ENCODE measurements at regions of chr22 and their contacts with region 1.

Region 1: DNA sequence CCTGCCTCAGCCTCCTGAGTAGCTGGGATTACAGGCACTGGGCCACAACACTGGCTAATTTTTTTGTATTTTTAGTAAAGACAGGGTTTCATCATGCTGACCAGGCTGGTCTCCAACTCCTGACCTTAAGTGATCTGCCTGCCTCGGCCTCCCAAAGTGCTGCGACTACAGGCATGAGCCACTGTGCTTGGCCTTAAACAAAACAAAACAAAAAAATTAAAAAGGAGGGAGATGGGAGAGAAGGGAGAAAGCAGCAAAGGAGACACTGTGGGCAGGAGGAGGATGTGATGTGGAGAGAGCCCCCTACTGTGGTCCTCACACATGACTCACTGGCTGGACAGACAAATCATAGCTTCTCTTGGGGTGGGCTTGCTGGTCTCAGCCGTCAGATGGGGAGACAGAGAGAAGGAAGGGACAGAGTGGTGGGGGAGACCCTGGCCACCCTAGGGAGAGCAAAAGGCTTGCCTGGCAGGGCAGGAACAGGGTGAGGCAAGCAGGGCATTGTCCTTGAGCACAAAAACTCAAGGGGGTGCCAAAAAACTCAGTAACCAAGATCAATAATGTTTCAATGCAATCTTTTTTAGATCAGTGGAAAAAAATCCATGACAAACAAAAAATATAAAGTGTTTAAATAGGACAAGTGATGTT is 31.6 kb downstream of the TPST2 start:
- DNase-seq: no peak

Region 2: GRCh38 chr22:27474711-27475547 is 916.6 kb after region 1 on chr22:
- intact Hi-C with region 1: loop called in 1 of 2 experiments (anchors 5 kb)
- DNase-seq: no peak

Measured in posterior vena cava (tissue), 2 donors.